Caco-2 (cell line): ENCODE measurements at regions of chr12 and their contacts with region 1.

Region 1: GRCh38 chr12:122834104-122834920 is 945 bp upstream of the HIP1R start:
- DNase-seq: peak; percentile 64 to 73
- H3K4me3 ChIP-seq: peak overlapping the region; percentile 72
- H3K4me3 Mint-ChIP-seq: peak overlapping the region; percentile 82
- H3K27ac Mint-ChIP-seq: peak overlapping the region; percentile 48
- H3K4me1 ChIP-seq: peaks cover 29% of the 10 kb centered on the region
- H3K4me1 Mint-ChIP-seq: peaks cover 40% of the 10 kb centered on the region
- H3K27me3 ChIP-seq: no peaks in the 10 kb centered on the region
- H3K27me3 Mint-ChIP-seq: no peaks in the 10 kb centered on the region
- CTCF ChIP-seq: peak; percentile 5 to 11

Region 2: GRCh38 chr12:122526683-122527477 is 307.4 kb before region 1 on chr12 and contains the starts of genes KNTC1 and RSRC2:
- CTCF ChIA-PET with region 1: no interaction called
- POLR2A ChIA-PET with region 1: no interaction called
- intact Hi-C with region 1: no loop called
- DNase-seq: peak; percentile 98 to 100
- H3K4me3 ChIP-seq: peak within 1 kb of the TSS; percentile 88
- H3K4me3 Mint-ChIP-seq: no peak within 1 kb of the TSS
- H3K27ac Mint-ChIP-seq: no peak within 1 kb of the TSS
- H3K4me1 ChIP-seq: peaks cover 20% of the 10 kb centered on the region
- H3K4me1 Mint-ChIP-seq: peaks cover 8% of the 10 kb centered on the region
- H3K27me3 ChIP-seq: no peaks in the 10 kb centered on the region
- H3K27me3 Mint-ChIP-seq: no peaks in the 10 kb centered on the region
- CTCF ChIP-seq: no peak
- total RNA-seq, gene KNTC1: 55.8 and 57.0 TPM in 2 replicates
- total RNA-seq, gene RSRC2: 77.9 and 79.0 TPM in 2 replicates

Region 3: GRCh38 chr12:122767691-122768090 is 66.6 kb before region 1 on chr12:
- CTCF ChIA-PET with region 1: no interaction called
- POLR2A ChIA-PET with region 1: no interaction called
- intact Hi-C with region 1: loop called (anchors 10 kb)
- DNase-seq: no peak
- H3K4me3 ChIP-seq: no peak overlapping the region
- H3K4me3 Mint-ChIP-seq: no peak overlapping the region
- H3K27ac Mint-ChIP-seq: no peak overlapping the region
- H3K4me1 ChIP-seq: 0 out of 2 replicates have a peak, but pooled peaks cover 3% of the 10 kb centered on the region
- H3K4me1 Mint-ChIP-seq: no peaks in the 10 kb centered on the region
- H3K27me3 ChIP-seq: no peaks in the 10 kb centered on the region
- H3K27me3 Mint-ChIP-seq: no peaks in the 10 kb centered on the region
- CTCF ChIP-seq: no peak

Region 4: GRCh38 chr12:122793685-122794106 is 40.6 kb before region 1 on chr12:
- CTCF ChIA-PET with region 1: interaction called, 5 read pairs
- POLR2A ChIA-PET with region 1: no interaction called
- intact Hi-C with region 1: loop called (anchors 2 kb)
- DNase-seq: peak in 1 of 2 experiments; percentile 34
- H3K4me3 ChIP-seq: no peak overlapping the region
- H3K4me3 Mint-ChIP-seq: no peak overlapping the region
- H3K27ac Mint-ChIP-seq: no peak overlapping the region
- H3K4me1 ChIP-seq: no peaks in the 10 kb centered on the region
- H3K4me1 Mint-ChIP-seq: no peaks in the 10 kb centered on the region
- H3K27me3 ChIP-seq: no peaks in the 10 kb centered on the region
- H3K27me3 Mint-ChIP-seq: no peaks in the 10 kb centered on the region
- CTCF ChIP-seq: peak; percentile 62 to 77

Region 5: DNA sequence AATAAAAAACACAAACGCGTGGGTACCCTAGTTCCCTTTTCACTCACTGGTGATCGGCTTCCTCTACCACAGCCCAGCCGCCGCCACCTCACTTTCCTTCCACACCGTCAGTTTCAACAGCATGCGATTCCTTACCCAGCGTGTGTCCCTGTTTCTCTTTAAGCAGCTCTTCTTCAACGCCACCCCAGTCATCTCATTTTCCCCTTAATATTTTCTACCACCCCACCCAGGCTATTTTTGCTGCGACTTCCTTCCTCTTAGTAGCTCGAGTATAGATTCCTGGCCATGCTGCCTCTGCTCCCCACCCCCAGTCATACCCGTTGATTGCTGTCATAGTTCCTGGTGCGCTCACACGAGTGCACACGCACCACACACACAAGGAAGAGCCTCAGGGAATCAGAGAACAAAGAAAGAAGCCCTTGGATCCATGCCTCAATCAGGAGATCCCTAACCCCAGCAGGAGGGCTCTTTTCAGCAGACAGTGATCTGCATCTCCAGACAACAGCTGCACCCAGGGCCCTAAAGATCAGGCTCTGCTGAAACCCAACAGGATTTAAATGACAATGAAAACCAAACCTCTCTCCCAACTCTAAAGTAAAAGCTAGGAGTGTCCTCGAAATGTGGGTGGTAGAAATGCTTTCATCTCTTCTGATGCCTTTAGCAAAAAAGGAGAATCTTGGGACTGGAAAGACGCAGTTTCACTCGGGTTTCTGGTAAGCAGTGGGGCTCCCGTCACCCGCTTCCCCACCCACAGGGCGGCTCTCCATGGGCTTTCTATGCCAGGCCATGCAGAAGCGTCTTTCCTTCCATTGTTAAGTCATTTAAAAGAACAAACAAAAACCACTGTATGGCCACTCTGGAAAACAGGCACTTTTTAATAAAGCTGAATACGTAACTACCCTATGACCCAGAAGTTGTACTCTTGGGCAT is 37.8 kb after region 1 on chr12:
- CTCF ChIA-PET with region 1: no interaction called
- POLR2A ChIA-PET with region 1: no interaction called
- intact Hi-C with region 1: no loop called
- DNase-seq: no peak
- H3K4me3 ChIP-seq: no peak overlapping the region
- H3K4me3 Mint-ChIP-seq: no peak overlapping the region
- H3K27ac Mint-ChIP-seq: peak overlapping the region; percentile 30
- H3K4me1 ChIP-seq: no peaks in the 10 kb centered on the region
- H3K4me1 Mint-ChIP-seq: peaks cover 7% of the 10 kb centered on the region
- H3K27me3 ChIP-seq: no peaks in the 10 kb centered on the region
- H3K27me3 Mint-ChIP-seq: no peaks in the 10 kb centered on the region
- CTCF ChIP-seq: no peak

Region 6: GRCh38 chr12:122937622-122938091 is 103.3 kb after region 1 on chr12:
- CTCF ChIA-PET with region 1: no interaction called
- POLR2A ChIA-PET with region 1: no interaction called
- intact Hi-C with region 1: no loop called
- DNase-seq: no peak
- H3K4me3 ChIP-seq: no peak overlapping the region
- H3K4me3 Mint-ChIP-seq: no peak overlapping the region
- H3K27ac Mint-ChIP-seq: no peak overlapping the region
- H3K4me1 ChIP-seq: no peaks in the 10 kb centered on the region
- H3K4me1 Mint-ChIP-seq: no peaks in the 10 kb centered on the region
- H3K27me3 ChIP-seq: no peaks in the 10 kb centered on the region
- H3K27me3 Mint-ChIP-seq: no peaks in the 10 kb centered on the region
- CTCF ChIP-seq: no peak